BJ (cell line): ENCODE measurements at regions of chr9 and their contacts with region 1.

Region 1: DNA sequence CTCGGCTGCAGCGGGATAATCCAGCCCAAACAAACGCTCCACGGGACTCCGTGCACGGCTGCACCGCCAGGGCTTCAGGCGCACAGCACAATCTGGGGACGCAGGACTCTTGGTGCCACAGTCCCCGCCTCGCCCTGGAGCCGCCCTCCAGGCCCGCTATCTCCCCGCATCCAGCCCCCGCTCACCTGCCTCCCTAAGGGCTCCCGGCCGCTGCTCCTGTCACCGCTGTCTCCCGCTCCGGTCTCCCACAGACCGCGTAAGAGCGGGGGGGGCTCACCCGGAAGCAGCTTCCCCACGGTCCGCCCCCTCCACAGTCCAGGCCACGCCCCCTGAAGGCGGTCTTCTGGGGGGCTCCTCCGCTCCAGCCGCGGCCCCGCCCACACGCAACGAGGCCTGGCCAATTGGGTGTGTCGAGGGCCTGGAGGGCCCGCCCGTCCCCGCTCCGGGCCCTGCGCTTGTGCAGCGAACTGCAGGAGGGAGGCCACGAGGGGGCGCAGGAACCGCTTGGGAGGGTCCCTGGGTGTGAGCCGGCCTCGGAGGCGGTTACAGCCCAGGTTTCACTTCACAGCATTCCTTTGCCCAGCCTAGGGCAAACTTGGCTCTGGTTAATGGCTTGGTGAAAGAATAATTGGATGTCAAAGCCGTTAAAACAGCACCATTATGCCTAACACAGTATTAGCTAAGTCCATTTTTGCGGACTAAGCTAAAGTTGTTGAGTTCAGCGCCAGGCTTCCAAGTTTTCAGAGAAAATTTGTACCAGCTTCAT is at the start of gene ALAD:
- DNase-seq: peak; percentile 87
- H3K4me3 ChIP-seq: peak within 1 kb of the TSS; percentile 76
- H3K27me3 ChIP-seq: no peaks in the 10 kb centered on the region
- CTCF ChIP-seq: peak; percentile 95
- polyA plus RNA-seq, gene ALAD: 9.2 and 9.5 TPM in 2 replicates

Region 2: GRCh38 chr9:113205432-113205831 is 195.8 kb before region 1 on chr9:
- CTCF ChIA-PET with region 1: no interaction called
- POLR2A ChIA-PET with region 1: no interaction called
- DNase-seq: no peak
- H3K4me3 ChIP-seq: no peak overlapping the region
- H3K27me3 ChIP-seq: no peaks in the 10 kb centered on the region
- CTCF ChIP-seq: no peak

Region 3: DNA sequence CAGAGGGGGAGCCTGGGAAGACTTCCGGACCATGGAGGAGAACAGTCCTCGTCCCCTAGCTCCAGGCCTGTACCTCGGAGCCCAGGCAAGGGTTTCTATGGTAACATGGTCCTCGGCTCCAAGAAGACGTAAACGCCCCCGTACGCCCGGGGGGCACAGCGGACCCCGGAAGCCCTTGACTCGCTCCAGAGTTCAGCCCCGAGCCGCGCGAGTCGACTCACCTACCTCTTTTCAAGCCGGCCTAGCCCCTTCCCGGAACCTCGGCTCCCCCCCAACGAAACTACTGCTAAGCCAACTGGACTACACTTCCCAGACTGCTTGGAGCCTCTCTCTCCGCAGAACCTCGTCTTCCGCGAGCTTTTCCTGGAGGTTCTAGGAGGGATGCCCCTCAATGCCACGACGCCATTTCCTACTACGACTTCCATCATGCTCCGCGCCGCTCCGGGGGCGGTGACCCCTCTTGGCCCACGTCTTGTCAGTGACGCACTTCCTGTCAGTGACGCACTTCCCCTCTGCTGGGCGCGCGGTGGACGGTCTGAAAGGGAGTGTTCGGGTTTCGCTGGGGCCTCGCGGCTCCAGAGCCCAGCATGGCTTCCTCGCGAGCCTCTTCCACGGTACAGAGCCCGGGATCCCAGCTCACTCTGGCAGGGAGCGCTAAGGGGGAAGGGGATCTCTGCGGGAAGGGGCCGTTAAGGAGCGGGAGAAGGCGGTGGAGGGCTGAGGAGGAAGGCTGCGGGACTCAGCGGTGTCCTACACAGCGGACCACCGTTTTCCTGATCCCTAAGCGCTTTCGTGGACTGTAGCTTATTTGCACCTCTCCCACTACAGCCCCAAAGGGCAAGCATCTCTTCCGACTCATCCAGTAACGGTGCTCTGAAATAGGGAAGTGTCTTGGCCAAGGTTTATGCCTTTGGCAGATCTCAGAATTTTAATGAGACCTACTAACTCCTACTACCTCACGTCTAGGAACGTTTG is 125.8 kb before region 1 on chr9 and contains the starts of genes CDC26 and PRPF4:
- CTCF ChIA-PET with region 1: interaction called, 45 read pairs
- POLR2A ChIA-PET with region 1: no interaction called
- DNase-seq: peak; percentile 92
- H3K4me3 ChIP-seq: peak within 1 kb of the TSS; percentile 63
- H3K27me3 ChIP-seq: no peaks in the 10 kb centered on the region
- CTCF ChIP-seq: no peak
- polyA plus RNA-seq, gene CDC26: 11.1 and 33.2 TPM in 2 replicates
- polyA plus RNA-seq, gene PRPF4: 16.6 and 18.3 TPM in 2 replicates

Region 4: DNA sequence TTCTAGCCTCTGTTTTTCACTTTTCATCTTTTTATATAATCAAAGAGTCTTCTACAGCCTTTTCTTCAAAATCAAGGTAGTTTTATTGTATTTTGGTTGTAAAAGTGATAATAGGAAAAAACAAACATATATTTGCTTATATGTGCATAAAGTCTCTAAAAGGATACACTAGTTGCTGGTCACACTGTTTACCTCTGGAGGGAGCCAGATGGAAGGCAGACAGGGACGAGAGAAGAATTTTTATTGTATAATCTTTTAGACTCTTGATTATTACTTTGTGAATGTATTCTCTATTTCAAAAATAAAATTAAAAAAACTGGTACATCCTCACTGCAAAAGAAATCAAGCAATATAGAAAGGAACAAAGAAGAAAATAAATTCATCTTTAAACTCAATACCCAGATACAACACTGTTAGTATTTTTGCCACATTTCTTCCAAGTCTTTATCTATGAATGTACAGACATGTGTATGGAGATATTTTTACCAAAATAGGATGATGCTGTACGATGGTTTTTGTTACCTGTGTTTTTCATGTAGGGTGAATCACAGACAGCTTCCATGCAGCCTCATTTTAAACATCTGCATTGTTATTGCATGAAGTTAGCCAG is 91.9 kb before region 1 on chr9:
- CTCF ChIA-PET with region 1: interaction called, 74 read pairs
- POLR2A ChIA-PET with region 1: interaction called, 3 read pairs
- DNase-seq: no peak
- H3K4me3 ChIP-seq: no peak overlapping the region
- H3K27me3 ChIP-seq: 0 out of 2 replicates have a peak, but pooled peaks cover 1% of the 10 kb centered on the region
- CTCF ChIP-seq: peak; percentile 74

Region 5: DNA sequence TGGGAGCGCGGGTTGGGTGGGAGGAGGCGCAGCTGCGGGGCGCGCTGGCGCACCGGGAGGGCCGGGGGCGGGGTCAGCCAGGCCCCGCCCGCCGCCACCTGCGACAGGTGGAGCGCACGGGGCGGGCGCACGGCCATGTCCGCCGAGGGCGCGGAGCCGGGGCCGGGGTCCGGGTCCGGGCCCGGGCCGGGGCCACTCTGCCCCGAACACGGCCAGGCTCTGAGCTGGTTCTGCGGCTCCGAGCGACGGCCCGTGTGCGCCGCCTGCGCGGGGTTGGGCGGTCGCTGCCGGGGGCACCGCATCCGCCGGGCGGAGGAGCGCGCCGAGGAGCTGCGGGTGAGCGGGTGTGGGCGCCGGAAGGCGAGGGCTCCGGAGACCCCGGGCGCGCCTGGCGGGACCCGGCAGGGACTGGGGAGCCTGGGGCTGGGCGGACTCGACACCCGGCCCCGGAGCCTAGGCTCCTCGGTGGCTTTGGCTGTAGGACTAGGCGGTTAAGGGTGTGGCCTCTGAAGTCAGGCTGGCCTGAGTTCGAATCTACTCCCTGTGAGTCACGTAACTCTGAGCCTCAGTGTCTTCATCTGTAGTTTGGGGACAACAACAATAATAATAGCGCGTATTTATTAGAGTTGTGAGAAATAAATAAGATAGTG is 51.6 kb before region 1 on chr9 and contains the start of gene BSPRY:
- CTCF ChIA-PET with region 1: interaction called, 16 read pairs
- POLR2A ChIA-PET with region 1: no interaction called
- DNase-seq: no peak
- H3K4me3 ChIP-seq: peak within 1 kb of the TSS; percentile 19; the same call in 1 of the 2 replicates
- H3K27me3 ChIP-seq: peaks cover 37% of the 10 kb centered on the region
- CTCF ChIP-seq: no peak
- polyA plus RNA-seq, gene BSPRY: not detected in 2 replicates

Region 6: GRCh38 chr9:113454914-113455761 is 53.9 kb after region 1 on chr9:
- CTCF ChIA-PET with region 1: interaction called, 3 read pairs
- POLR2A ChIA-PET with region 1: interaction called, 18 read pairs
- DNase-seq: peak; percentile 59
- H3K4me3 ChIP-seq: no peak overlapping the region
- H3K27me3 ChIP-seq: no peaks in the 10 kb centered on the region
- CTCF ChIP-seq: no peak

Region 7: DNA sequence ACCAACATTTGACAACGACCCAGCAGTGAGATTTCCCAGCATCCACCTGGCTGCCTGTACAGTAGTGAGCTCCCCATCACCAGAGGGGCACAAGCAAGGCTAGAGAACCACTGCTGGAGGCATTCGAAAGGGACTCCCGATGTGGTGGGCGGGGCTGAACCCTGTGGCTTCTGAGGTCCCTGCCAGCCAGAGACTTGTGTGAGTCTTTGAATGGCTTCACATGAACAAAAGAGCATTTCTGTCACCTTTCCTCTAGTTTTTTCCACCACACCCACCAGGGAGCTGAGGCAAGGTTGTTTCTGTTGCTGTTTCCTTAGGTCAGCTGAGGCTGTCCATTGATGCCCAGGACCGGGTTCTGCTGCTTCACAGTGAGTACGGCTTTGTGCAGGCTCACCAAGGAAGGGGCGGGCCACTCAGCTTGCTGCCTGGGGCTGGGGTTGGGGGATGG is 78.0 kb after region 1 on chr9:
- CTCF ChIA-PET with region 1: no interaction called
- POLR2A ChIA-PET with region 1: no interaction called
- DNase-seq: no peak
- H3K4me3 ChIP-seq: no peak overlapping the region
- H3K27me3 ChIP-seq: peaks cover 2% of the 10 kb centered on the region
- CTCF ChIP-seq: no peak